AG04450 (cell line): ENCODE measurements at regions of chr16 and their contacts with region 1.

Region 1: GRCh38 chr16:73878611-73879010 is 418.0 kb upstream of the PSMD7 start:
- DNase-seq: peak; percentile 39
- H3K4me3 ChIP-seq: no peak overlapping the region
- H3K27ac ChIP-seq: no peak overlapping the region
- H3K27me3 ChIP-seq: peaks cover 2% of the 10 kb centered on the region
- CTCF ChIP-seq: peak; percentile 69

Region 2: DNA sequence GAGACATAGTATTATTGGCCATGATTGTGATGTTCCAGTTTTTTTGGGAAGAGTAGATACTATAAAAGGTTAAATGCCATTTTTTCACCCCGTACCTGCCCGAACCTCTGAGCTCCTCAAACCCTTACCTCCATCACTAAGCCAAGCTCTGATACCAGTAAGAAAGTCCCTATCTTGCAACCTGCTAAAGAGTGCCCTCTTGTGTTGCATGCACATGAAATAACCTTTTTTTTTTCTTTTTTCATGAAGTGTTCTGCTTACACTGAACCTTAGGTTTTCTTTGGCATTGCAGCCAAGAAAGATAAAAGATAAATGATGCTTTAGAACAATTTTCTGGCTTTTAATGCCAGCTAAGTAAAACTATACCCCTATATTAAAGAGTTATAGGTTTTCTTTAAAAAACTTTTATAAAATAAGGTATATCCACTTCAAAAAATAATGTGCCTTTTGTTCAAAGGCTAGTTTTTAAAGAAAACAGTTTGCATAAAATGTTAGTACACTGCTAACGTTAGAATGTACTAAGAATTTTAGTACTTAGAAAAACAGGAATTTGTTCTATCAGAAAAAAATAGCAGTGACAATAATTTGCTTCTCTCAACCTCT is 1411.4 kb before region 1 on chr16:
- CTCF ChIA-PET with region 1: interaction called, 11 read pairs
- POLR2A ChIA-PET with region 1: no interaction called
- DNase-seq: peak; percentile 6
- H3K4me3 ChIP-seq: no peak overlapping the region
- H3K27ac ChIP-seq: no peak overlapping the region
- H3K27me3 ChIP-seq: no peaks in the 10 kb centered on the region
- CTCF ChIP-seq: peak; percentile 86

Region 3: DNA sequence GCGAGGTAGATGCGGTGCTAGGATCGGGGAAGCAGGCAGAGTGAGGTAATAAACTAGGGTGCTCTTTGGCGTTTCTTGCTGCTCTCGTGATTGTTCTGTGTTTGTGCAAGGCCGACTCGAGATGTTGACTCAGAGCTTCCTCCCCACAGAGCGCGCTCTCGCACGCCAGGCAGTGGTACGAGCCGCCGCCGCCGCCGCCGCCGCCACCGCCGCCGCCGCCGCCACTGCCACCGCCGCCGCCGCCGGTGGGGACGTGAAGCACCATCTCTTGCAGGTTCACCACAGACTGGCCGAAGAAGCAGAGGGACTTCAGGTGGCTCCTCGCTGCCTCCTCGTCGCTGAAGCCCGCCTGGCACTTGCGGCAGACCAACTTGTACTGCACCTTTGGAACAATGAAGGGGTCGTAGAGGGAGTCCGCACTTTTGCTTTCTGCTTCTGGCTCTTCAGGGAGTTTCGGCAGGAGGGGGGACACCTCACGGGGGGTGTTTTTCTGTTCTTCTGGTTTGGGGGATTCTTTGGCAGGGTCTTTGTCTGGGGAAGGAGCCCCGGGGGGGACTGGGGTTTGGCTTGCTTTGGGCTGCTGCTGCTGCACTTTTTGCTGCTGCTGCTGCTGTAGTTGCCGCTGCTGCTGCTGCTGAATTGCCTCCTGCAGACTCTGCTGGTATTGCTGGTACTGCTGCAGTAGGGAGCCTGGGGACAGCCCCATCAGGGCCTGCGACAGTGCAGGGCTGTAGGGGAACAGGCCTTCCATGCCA is 1090.9 kb before region 1 on chr16:
- CTCF ChIA-PET with region 1: interaction called, 10 read pairs
- POLR2A ChIA-PET with region 1: no interaction called
- DNase-seq: peak; percentile 56
- H3K4me3 ChIP-seq: peak overlapping the region; percentile 67
- H3K27ac ChIP-seq: peak overlapping the region; percentile 88
- H3K27me3 ChIP-seq: no peaks in the 10 kb centered on the region
- CTCF ChIP-seq: no peak

Region 4: DNA sequence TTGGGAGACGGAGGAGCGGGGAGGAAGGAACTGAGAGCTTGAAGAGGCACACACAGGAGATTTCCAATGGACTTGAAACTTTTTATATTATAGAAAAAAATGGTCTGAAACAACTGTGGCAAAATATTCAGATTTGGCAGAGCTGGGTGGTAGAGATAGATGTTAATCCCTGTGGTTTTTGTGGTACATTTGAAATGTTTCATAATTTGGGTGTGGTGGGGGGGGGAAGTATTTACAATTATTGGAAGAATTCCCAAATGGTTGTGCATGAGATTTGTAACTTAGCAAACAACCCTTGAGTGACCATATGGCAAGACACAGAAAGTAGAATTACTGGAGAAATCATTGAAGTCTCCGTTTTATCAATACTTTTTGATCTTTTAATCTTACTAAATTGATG is 170.7 kb before region 1 on chr16:
- CTCF ChIA-PET with region 1: interaction called, 12 read pairs
- POLR2A ChIA-PET with region 1: no interaction called
- DNase-seq: no peak
- H3K4me3 ChIP-seq: no peak overlapping the region
- H3K27ac ChIP-seq: no peak overlapping the region
- H3K27me3 ChIP-seq: peaks cover 4% of the 10 kb centered on the region
- CTCF ChIP-seq: no peak

Region 5: GRCh38 chr16:73891129-73891542 is 12.5 kb after region 1 on chr16:
- CTCF ChIA-PET with region 1: interaction called, 16 read pairs
- POLR2A ChIA-PET with region 1: no interaction called
- DNase-seq: no peak
- H3K4me3 ChIP-seq: peak overlapping the region; percentile 34
- H3K27ac ChIP-seq: no peak overlapping the region
- H3K27me3 ChIP-seq: peaks cover 3% of the 10 kb centered on the region
- CTCF ChIP-seq: no peak